AG04450 (cell line): ENCODE measurements at regions of chr14 and their contacts with region 1.

Region 1: DNA sequence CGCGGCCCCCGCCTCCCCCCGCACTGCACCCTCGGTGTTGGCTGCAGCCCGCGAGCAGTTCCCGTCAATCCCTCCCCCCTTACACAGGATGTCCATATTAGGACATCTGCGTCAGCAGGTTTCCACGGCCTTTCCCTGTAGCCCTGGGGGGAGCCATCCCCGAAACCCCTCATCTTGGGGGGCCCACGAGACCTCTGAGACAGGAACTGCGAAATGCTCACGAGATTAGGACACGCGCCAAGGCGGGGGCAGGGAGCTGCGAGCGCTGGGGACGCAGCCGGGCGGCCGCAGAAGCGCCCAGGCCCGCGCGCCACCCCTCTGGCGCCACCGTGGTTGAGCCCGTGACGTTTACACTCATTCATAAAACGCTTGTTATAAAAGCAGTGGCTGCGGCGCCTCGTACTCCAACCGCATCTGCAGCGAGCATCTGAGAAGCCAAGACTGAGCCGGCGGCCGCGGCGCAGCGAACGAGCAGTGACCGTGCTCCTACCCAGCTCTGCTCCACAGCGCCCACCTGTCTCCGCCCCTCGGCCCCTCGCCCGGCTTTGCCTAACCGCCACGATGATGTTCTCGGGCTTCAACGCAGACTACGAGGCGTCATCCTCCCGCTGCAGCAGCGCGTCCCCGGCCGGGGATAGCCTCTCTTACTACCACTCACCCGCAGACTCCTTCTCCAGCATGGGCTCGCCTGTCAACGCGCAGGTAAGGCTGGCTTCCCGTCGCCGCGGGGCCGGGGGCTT is at the start of gene FOS:
- DNase-seq: no peak
- H3K4me3 ChIP-seq: peak within 1 kb of the TSS; percentile 90
- H3K27ac ChIP-seq: peak within 1 kb of the TSS; percentile 87
- H3K27me3 ChIP-seq: no peaks in the 10 kb centered on the region
- CTCF ChIP-seq: no peak
- polyA plus RNA-seq, gene FOS: 30.6 and 55.8 TPM in 2 replicates

Region 2: DNA sequence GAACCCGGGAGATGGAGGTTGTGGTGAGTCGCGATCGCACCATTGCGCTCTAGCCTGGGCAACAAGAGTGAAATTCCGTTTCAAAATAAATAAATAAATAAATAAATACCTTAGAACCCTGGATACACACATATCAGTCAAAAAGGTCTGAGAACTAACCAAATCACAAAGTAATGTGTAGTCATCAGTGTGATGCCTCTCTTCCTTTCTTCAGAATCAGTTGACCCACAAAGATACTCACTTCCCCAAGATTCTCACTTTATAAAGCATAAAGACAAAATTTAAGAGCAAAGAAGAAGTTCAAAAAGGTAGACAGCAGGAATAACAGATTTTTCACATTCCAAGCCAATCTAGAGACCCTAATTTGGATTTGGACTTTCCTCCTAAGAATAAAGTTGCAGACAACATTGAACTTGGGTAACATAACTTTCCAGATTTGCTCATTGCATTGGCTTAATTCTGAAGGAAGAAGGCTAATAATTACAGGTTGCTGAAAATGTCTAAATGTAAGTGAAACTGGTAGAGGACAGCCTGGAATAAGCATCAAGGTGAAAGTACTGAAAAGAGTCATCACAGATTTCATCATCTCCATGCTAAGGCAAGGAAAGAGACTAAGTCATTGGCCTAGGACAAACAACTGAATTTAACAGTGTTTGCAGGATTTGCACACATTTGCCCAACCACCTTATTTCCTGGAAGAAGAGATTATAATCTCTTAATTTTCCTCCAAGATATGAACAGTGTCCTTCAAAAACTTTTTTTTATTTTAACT is 119.6 kb before region 1 on chr14:
- CTCF ChIA-PET with region 1: no interaction called
- POLR2A ChIA-PET with region 1: interaction called, 10 read pairs
- DNase-seq: no peak
- H3K4me3 ChIP-seq: no peak overlapping the region
- H3K27ac ChIP-seq: no peak overlapping the region
- H3K27me3 ChIP-seq: no peaks in the 10 kb centered on the region
- CTCF ChIP-seq: no peak

Region 3: DNA sequence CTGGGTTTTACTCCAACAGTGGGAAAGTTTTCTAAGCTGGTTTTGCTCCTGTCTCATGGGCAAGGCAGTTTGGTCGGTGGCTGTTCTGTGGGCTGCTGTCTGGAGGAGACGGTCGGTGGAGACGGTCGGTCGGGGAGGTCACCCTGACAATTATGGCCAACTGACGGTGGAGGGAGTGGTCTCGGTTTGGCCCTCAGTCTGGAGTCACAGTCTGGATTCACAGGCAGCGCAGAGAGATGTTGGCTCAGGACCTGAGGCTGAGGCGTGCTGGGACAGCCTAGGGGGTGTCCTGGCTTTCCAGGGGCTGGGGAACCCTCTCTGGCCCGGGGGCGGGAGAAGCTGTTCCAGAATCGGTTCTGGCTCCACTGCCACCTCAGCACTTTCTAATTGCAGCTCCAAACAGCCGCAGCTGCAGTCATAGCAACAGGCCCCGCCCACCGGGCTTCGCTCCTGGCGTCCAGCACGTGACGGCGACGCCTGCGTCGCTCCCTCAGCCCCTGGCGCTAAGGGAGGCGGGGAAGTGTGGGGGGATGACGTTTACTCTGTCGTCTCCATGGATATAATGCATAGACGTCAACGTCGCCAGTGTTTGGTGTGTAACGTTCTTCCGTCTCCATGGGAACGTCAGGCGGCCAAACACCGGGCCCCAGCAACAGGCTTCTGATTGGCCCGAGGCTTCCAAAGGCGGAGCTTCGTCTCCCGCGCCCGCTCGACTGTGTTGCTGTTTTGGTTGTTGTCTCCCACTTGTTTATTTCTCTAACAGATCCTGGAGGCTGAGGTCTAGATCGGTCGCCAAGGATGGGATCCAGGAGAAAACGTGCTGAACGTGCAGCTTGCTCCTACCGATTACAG is 19.8 kb before region 1 on chr14:
- CTCF ChIA-PET with region 1: no interaction called
- POLR2A ChIA-PET with region 1: interaction called, 23 read pairs
- DNase-seq: peak; percentile 99
- H3K4me3 ChIP-seq: peak overlapping the region; percentile 65
- H3K27ac ChIP-seq: peak overlapping the region; percentile 97
- H3K27me3 ChIP-seq: peaks cover under 1% of the 10 kb centered on the region
- CTCF ChIP-seq: no peak

Region 4: DNA sequence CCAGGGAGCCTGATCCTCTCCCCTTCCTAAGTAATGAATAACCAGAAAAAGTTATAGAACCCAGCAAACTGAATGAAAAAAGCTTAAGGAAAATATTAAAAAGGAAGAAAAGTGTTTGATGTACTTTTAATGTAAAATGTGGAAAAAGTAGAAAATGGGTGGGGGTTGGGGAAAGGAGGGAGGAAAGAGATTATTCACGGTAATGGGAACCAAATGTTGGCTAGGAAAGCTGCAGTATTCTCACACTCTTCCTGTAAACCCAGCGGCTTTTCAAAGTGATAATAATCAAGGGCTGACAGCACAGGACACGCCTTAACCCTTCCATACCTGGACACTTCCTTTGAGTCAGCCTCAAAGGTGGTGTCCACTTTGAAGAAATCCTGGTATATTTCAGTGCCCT is 564.0 kb after region 1 on chr14:
- CTCF ChIA-PET with region 1: no interaction called
- POLR2A ChIA-PET with region 1: no interaction called
- DNase-seq: no peak
- H3K4me3 ChIP-seq: no peak overlapping the region
- H3K27ac ChIP-seq: no peak overlapping the region
- H3K27me3 ChIP-seq: no peaks in the 10 kb centered on the region
- CTCF ChIP-seq: no peak